A549 (cell line): ENCODE measurements at regions of chr17 and their contacts with region 1.

Region 1: DNA sequence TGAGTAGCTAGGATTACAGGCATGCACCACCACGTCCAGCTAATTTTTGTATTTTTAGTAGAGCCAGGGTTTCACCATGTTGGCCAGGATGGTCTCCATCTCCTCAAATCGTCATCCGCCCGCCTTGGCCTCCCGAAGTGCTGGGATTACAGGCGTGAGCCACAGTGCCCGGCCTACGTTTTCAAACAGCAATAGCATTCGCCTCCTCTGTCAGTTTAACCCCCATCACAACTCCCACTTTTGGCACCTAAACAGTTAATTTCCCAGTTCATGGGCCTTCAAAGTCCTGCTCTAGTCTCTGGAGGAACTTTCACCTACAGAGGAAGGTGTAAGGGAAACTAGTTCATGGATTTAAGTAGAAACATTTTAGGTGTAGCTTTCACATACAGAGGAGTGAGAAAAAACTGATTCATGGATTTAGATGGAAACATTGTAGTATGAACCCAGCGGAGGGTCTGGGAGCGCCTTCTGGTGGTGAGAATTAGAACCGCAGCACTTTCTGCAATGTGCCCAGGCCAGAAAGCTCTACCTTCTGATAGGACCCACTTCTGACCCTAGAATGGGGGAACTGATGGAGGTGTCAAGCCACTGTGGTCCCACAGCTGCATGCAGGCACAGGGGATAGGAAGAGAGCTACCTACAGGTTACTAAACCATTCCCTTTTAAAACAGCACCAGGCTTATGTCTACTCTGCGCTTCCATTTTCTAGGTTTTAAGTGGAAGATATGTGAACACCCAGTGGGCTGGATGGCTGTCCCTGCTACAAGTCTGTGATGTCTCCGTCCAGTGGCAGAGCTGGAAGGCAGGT is 12.0 kb upstream of the MEOX1 start:
- DNase-seq: peak; percentile 68 to 82
- ATAC-seq: peak; percentile 55 to 81; a peak in 5 of 6 replicates
- H3K4me3 ChIP-seq: no peak overlapping the region
- H3K27ac ChIP-seq: no peak overlapping the region
- H3K4me1 ChIP-seq: peaks cover 3% of the 10 kb centered on the region; the same call in 1 of the 3 replicates
- CTCF ChIP-seq: peak; percentile 99
- EP300 ChIP-seq: no peak
- POLR2A ChIP-seq: no peak
- RAD21 ChIP-seq: peak; percentile 95 to 98

Region 2: DNA sequence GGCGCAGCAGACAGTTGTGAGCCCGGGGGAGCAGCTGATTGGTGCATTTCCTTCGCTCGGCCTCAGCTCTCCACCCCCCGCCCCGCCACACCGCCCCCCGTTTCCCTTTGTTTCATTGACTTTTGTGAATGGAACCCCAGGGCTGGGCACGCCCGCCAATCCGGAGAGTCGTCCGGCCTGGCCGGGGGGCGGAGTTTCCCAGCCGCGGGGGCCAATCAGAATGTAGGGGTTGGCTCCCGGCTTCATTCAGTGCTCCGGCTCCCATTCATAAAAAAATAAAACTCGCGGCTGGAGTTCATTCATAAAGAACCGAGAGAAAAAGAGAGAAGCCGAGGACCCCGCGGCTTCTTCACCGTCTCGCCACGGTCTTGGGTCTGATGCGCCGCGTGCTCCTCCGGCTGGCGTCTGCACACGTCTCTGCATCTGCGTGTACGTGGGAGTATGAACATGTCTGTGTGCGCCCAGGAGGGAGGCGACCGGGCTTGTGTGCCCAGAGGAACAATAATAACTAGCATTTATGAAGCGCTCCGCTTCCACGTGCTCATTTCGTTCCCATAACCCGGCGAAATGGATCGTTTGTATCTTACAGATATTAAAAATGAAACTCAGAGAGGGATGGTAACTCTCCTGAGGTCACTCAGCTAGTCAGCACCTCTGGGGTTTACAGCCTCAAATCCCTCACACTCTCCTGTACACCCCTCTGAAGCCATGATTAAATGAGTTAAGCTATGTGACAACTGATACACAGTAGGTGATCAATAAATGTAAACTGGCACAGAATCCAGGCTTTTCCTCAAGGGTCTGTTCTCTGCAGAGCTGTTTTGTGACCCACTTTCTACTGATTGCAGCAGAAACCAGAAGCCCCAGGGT is 127.2 kb before region 1 on chr17 and contains the start of gene ETV4:
- CTCF ChIA-PET with region 1: interaction called, 17 read pairs
- POLR2A ChIA-PET with region 1: no interaction called
- DNase-seq: peak; percentile 96 to 100
- ATAC-seq: peak; percentile 76 to 86
- H3K4me3 ChIP-seq: peak within 1 kb of the TSS; percentile 60
- H3K27ac ChIP-seq: peak within 1 kb of the TSS; percentile 85 to 95
- H3K4me1 ChIP-seq: peaks cover 23% of the 10 kb centered on the region
- CTCF ChIP-seq: no peak
- EP300 ChIP-seq: no peak
- POLR2A ChIP-seq: no peak
- RAD21 ChIP-seq: no peak
- polyA plus RNA-seq, gene ETV4: 39.1 and 42.5 TPM in 2 replicates

Region 3: DNA sequence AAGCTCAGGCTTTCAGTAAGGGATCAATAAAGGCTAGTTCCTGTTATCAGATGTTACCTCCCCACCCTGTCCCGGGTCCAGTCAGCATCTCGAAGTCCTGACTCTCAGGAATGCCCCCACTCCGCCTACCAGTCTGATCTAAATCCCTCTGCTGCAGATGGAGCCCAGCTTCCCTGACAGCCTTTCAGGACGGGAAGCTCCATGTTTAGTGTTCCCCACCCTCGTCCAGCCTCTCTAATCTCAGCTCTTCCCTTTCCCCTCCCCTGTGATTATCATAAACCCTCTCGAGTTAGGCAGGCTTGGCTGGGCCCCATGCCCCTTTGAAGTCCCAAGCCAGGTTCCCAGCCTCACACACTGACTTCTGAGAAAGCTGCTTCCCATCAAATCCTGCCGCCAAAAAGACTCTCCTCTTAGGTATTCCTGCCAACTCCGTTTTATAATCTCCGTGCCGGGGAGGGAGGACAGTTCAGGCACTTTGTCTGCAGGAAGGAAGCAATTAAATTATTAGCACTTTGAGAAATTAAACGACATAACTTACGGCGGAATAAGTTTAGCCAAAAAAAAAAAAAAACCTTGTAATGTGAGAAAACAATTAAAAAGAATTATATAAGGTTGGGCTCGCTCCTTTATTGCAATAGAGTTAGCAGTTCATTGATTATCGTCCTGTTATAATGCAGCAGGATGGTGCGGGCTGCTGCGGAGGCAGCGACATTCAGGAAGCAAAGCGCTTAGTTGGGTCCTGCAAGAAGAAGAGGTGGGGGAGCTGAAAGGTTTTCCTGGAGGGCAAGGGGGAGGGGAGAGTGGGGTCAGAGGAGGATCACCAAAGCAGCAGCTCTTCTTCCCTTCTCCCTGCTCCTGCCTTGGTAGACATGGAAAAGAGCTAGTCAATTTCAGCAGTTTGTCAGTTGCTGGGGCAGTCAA is 110.8 kb before region 1 on chr17:
- CTCF ChIA-PET with region 1: interaction called, 33 read pairs
- POLR2A ChIA-PET with region 1: no interaction called
- DNase-seq: no peak
- ATAC-seq: no peak
- H3K4me3 ChIP-seq: no peak overlapping the region
- H3K27ac ChIP-seq: no peak overlapping the region; a peak in 1 of 6 replicates
- H3K4me1 ChIP-seq: 0 out of 3 replicates have a peak, but pooled peaks cover 3% of the 10 kb centered on the region
- CTCF ChIP-seq: no peak
- EP300 ChIP-seq: no peak
- POLR2A ChIP-seq: no peak
- RAD21 ChIP-seq: no peak

Region 4: DNA sequence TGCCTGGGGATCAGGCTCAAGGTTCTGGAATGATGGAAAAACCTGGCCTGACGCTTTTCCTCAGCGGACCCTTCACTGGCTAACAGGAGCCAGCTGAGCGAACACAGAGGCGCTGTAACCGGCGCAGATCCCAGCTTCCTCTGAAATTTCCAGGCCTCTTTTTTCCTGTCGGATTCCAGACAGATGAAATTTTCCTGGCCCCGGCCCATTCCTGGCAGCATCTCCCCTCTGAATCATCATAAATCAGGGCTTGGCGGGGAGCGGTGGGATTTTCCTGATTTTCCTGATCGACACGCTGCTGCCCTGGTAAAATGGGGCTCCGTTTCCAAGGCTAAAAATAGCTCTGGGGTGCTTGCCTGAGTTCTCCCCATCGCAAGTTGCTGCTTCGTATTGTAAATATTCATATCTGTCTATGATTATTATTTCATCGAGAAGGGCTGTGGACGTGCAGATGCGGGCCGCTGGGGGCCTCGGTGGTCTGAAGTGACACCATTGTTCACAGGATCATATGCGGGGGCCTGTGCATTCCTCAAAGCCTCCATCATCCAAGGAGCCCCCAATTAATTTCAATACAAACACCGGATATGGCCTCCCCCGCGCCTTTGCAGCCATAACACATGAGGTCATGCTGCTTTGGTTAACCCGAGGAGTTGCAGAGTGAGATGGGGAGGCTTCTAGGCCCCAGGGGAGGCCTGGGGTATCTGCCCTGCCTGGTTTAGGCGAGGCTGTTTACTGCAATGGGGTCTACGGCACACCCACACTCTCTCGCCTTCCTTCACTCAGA is 81.7 kb before region 1 on chr17:
- CTCF ChIA-PET with region 1: interaction called, 36 read pairs
- POLR2A ChIA-PET with region 1: no interaction called
- DNase-seq: no peak
- ATAC-seq: peak; percentile 9 to 30; a peak in 2 of 6 replicates
- H3K4me3 ChIP-seq: no peak overlapping the region
- H3K27ac ChIP-seq: peak overlapping the region in 1 of 2 experiments; percentile 35; a peak in 1 of 6 replicates
- H3K4me1 ChIP-seq: no peaks in the 10 kb centered on the region
- CTCF ChIP-seq: no peak
- EP300 ChIP-seq: no peak
- POLR2A ChIP-seq: no peak
- RAD21 ChIP-seq: no peak

Region 5: GRCh38 chr17:43615330-43616028 is 58.2 kb before region 1 on chr17:
- CTCF ChIA-PET with region 1: interaction called, 15 read pairs
- POLR2A ChIA-PET with region 1: no interaction called
- DNase-seq: no peak
- ATAC-seq: no peak
- H3K4me3 ChIP-seq: no peak overlapping the region
- H3K27ac ChIP-seq: no peak overlapping the region
- H3K4me1 ChIP-seq: 0 out of 3 replicates have a peak, but pooled peaks cover 10% of the 10 kb centered on the region
- CTCF ChIP-seq: no peak
- EP300 ChIP-seq: no peak
- POLR2A ChIP-seq: no peak
- RAD21 ChIP-seq: no peak

Region 6: DNA sequence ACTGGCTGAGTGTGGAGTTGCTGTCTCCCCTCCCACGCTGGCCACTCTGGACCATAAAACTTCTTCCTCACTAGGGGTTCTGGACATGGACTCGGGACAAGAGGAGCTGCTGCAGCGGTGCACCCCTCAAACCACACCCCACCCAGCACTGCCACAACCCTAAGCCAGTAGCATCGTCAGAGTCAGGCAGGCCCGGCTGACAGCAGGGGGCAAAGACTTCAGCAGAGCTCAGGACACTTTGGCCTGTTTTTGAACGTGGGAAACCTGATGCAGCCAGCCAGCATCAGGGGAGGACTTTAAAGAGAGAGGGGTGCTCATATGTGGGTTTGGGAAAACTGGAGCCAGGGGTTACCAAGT is 21.6 kb before region 1 on chr17:
- CTCF ChIA-PET with region 1: interaction called, 27 read pairs
- POLR2A ChIA-PET with region 1: no interaction called
- DNase-seq: no peak
- ATAC-seq: no peak; a peak in 2 of 6 replicates
- H3K4me3 ChIP-seq: no peak overlapping the region
- H3K27ac ChIP-seq: no peak overlapping the region
- H3K4me1 ChIP-seq: no peaks in the 10 kb centered on the region; the same call in 2 of the 3 replicates
- CTCF ChIP-seq: no peak
- EP300 ChIP-seq: no peak
- POLR2A ChIP-seq: no peak
- RAD21 ChIP-seq: no peak

Region 7: GRCh38 chr17:43683928-43684653 is 10.4 kb after region 1 on chr17:
- CTCF ChIA-PET with region 1: interaction called, 34 read pairs
- POLR2A ChIA-PET with region 1: interaction called, 3 read pairs
- DNase-seq: no peak
- ATAC-seq: peak in 1 of 2 experiments; percentile 42; a peak in 4 of 6 replicates
- H3K4me3 ChIP-seq: no peak overlapping the region
- H3K27ac ChIP-seq: no peak overlapping the region
- H3K4me1 ChIP-seq: peaks cover 9% of the 10 kb centered on the region; the same call in 2 of the 3 replicates
- CTCF ChIP-seq: no peak
- EP300 ChIP-seq: no peak
- POLR2A ChIP-seq: no peak
- RAD21 ChIP-seq: no peak